ENCODE measurements at regions of chr12 and their contacts with region 1.

Region 1: DNA sequence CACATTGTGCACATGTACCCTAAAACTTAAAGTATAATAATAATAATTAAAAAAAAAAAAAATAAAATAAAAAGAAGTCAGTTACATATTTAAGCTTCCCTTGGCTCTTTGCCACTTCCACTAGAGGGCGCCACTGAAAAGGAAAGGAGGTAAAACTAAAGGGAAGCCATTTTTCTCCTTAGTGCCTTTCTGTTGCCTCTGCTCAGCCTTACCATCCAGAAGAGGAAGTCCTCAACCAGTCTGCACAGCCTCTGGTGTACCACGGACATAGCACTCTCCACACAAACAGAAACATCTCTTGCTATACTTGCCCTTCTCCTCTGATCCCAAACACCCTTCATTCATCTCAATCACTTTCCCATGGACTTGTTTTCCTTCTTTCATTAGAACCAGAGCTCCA is 169.0 kb upstream of the EEA1 start:
- DNase-seq: peak; percentile 90 to 95 (median 94)
- H3K4me3 ChIP-seq: no peak overlapping the region
- H3K27ac ChIP-seq: no peak overlapping the region
- H3K4me1 ChIP-seq: peaks cover 0 to 8% (median 4%) of the 10 kb centered on the region in 4 experiments
- H3K27me3 ChIP-seq: no peaks in the 10 kb centered on the region

Region 2: GRCh38 chr12:93064630-93065029 is 33.4 kb before region 1 on chr12:
- CTCF ChIA-PET with region 1: no interaction called
- POLR2A ChIA-PET with region 1: no interaction called
- DNase-seq: no peak
- H3K4me3 ChIP-seq: no peak overlapping the region
- H3K27ac ChIP-seq: no peak overlapping the region
- H3K4me1 ChIP-seq: peaks cover 0 to 2% (median under 1%) of the 10 kb centered on the region in 4 experiments
- H3K27me3 ChIP-seq: no peaks in the 10 kb centered on the region

Region 3: DNA sequence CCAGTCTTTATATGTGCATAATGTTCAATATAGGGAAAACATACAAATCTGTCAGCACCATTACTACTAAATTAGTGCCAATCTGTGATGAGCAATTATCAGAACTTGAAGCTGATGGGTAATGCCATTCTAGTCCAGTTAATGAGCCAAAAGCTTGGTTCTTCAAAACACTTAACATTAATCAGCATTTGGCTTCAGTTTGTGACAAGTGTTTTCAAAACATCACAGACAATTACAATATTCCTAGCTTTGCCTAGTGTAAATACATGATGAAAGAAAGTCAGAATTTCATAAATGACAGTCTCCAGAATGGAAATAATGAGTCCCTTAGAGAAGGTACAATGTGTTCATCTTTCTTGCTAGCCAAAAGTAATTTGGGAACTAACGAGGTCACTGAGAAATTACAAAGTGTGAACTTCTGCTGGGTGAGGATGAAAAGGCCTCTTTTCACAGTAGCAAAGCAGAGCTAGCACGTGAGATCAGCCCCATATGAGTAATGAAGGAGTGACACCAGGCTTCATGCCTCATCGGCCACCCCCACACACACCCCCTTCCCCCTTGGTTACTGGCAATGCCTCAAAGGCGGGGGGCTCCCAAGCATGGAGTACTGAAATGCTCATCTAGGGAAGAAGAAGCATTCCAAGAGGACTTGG is 11.6 kb after region 1 on chr12:
- CTCF ChIA-PET with region 1: interaction called, 16 read pairs
- POLR2A ChIA-PET with region 1: no interaction called
- DNase-seq: no peak
- H3K4me3 ChIP-seq: no peak overlapping the region
- H3K27ac ChIP-seq: no peak overlapping the region
- H3K4me1 ChIP-seq: peaks cover 0 to 12% (median 6%) of the 10 kb centered on the region in 4 experiments
- H3K27me3 ChIP-seq: no peaks in the 10 kb centered on the region

Region 4: DNA sequence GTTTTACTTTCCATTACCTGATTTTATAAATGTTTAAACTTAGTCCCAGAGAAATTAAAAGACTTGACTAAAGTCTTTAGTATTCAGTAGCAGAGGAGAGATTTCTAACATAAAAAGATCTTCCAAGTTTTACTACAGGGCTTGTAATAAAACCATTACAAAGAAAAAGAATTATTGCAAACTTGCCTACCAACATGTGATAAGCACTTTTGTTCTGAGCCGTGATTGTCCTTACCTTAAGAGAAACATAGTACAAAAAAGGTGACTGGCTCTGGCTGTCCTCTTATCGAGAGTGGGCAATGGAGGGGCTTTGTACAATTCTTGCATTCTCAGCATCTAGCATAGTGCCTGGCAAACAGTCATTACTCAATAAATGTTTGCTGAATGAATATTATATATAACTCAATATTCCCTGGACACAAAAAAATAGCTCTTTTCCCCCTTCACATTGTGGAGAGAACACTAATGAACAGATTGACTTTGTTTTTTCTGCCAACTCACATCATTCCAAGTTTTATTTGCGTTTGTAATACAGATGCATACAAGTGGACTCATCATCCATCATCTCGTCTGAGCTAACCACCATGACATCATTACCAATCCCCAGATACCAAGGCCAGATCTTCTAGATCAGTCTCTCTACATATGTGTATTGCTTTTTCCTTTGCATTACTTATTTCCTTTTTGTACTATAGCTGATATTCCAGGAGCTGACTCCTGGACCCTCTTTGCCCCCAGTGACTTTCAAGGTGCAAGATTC is 23.8 kb after region 1 on chr12:
- CTCF ChIA-PET with region 1: interaction called, 12 read pairs
- POLR2A ChIA-PET with region 1: no interaction called
- DNase-seq: no peak
- H3K4me3 ChIP-seq: no peak overlapping the region
- H3K27ac ChIP-seq: no peak overlapping the region
- H3K4me1 ChIP-seq: peaks cover 0 to 8% (median 4%) of the 10 kb centered on the region in 4 experiments
- H3K27me3 ChIP-seq: no peaks in the 10 kb centered on the region

Region 5: GRCh38 chr12:93322784-93323183 is 224.7 kb after region 1 on chr12:
- CTCF ChIA-PET with region 1: no interaction called
- POLR2A ChIA-PET with region 1: no interaction called
- DNase-seq: no peak
- H3K4me3 ChIP-seq: no peak overlapping the region
- H3K27ac ChIP-seq: no peak overlapping the region
- H3K4me1 ChIP-seq: no peaks in the 10 kb centered on the region
- H3K27me3 ChIP-seq: no peaks in the 10 kb centered on the region